Right ventricle myocardium inferior (tissue), 1 donor: ENCODE measurements at regions of chr9 and their contacts with region 1.

Region 1: GRCh38 chr9:136400038-136400834 is at the start of gene SNAPC4:
- DNase-seq: peak; percentile 96
- ATAC-seq: peak; percentile 91
- total RNA-seq, gene SNAPC4: 4.0 TPM

Region 2: DNA sequence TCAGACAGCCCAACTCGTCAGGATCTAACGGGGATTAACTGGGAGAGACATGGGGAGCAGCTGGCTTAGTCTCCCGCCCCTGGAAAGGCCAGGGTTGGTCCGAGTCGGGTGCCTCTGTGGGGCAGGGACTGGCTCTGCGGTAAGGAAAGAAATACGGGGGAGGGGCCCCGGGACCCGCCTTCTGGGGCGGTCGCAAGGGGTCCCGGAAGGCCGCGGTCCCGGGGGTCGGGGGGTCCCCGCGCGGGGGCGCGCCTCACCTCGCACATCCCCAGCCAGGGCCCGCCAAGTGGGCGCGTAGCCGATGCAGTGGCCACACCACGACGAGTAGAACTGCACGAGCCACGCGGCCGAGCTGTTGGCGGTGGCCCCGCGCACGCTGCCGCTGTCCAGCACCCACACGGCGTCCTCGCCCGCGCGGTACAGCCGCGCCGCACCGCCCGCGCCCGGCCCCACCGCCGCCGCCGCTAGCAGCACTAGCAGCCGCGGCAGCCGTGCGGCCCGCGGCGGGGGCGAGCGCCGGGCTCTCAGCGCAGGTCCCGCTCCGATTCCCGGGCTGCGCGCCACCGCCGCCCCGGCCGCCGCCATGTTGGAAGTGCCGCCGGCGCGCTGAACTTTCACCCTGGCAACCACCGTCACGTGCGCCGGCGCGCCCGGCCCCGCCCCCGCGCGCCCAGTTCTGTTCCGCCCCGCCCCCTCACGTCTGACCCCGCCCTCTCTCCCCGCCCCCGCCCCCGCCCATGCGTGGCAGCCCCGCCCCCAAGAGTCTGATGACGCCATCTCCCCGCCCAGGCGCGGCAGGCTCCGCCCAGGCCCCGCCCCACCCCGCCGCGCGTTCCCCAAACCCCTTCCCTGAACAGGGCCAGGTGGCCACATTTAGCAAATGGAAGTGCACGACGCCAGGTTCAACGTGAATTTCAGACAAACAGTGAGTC is 154.8 kb before region 1 on chr9 and contains the start of gene QSOX2:
- intact Hi-C with region 1: loop called (anchors 5 kb)
- DNase-seq: peak; percentile 92
- ATAC-seq: peak; percentile 82
- total RNA-seq, gene QSOX2: 8.3 TPM

Region 3: GRCh38 chr9:136312436-136312835 is 87.8 kb before region 1 on chr9:
- intact Hi-C with region 1: loop called (anchors 1 kb)
- DNase-seq: peak; percentile 60
- ATAC-seq: peak; percentile 73

Region 4: DNA sequence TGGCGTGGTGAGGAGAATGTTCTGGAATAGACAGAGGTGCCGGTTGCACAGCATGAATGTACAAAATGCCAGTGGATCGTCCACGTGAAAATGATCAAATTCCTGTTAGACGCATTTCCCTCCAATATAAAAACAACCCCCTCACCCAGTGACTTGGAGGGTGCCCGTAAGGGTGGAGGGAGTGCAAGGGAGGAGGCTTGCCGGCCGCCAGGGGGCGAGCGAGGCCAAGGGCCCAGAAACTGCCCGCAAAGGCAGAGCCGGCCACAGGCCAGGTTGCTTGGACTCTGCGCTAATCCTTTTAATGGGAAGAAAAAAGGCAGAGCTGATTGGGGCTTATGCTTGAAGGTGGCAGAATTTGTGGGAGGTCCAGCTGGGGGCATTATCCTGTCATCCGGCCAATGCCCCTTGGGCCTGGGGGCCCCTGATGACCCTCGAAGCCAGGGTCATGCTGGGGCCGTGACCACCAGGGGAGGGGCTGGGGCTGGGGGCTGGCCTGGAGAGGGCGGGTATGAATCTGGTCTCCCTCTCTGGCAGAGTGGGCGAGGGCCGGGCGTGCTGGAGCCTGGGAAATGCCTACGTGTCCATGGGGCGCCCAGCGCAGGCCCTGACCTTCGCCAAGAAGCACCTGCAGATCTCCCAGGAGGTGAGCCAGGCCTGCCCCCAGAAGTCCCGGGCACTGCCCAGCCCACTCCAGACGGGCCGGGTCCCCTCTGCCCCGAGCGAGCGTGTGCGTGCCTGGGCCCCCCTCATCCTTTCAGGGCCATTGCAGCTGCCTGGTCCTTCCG is 60.9 kb before region 1 on chr9:
- intact Hi-C with region 1: loop called (anchors 1 kb)
- DNase-seq: peak; percentile 90
- ATAC-seq: no peak

Region 5: GRCh38 chr9:136451221-136451877 is 51.1 kb after region 1 on chr9:
- intact Hi-C with region 1: no loop called
- DNase-seq: no peak
- ATAC-seq: no peak